Posterior vena cava (tissue), 2 donors: ENCODE measurements at regions of chr17 and their contacts with region 1.

Region 1: DNA sequence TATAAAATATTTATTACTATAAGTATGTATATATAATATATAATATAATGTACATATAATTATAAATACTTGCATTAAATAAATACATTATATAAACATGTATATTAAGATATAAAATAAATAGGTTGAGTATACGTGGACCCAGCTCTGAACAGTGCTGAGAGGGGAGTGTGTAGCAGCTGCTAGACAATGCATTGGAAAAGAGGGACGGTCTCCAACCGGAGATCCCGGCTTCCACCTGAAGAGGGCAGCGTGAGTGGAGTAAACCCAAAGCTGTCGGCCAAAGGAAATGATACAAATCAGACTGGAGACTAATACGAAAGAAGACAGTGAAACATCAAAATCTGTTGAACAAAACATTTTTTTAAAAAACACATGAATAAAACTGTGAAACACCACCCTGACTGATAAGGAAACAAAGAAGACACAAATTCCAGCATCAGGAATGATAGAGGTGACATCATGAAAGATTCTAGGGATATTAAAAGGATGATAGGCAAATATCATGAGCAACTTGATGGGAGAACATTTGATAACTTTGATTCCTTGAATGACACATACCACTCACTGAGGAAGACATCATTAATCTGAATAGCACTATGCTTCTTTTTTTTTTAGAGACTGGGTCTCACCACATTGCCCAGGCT is 125.4 kb upstream of the CHMP6 start:
- DNase-seq: peak; percentile 90

Region 2: DNA sequence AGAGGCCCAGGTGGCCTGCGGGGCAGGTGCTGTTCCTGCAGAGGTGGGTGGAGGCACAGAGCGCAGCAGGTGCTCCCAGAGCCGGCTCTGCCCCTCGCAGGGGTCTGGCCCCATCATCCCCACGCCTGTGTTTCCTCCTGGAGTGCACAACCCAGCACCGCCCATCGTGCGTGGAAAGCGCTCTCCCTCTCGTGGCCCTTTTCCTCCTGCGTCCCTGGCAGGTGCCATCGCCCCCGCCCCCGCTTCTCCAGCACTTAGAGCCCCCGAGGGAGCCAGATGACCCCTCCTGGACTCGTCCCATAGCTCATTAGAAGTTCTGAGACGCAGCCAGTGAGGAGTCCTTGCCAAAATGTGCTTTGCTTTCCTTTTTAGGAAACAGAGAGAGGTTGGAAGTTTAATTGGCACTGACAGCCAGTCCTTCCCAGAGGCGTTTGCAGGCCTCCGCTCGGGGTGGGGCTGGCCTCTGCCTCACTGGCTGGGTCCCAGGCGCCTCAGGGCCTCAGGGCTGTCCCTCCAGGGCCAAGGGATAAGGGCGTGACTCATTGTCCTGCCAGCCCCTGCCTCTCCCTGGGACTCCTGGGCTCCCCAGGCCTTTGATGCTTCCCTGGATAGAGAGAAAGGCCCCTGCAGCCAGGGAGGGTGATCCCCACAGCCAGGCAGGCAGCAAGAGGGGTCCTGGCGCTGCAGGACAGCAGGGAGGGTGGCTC is 93.2 kb after region 1 on chr17:
- intact Hi-C with region 1: loop called in 1 of 2 experiments (anchors 5 kb)
- DNase-seq: peak; percentile 96

Region 3: DNA sequence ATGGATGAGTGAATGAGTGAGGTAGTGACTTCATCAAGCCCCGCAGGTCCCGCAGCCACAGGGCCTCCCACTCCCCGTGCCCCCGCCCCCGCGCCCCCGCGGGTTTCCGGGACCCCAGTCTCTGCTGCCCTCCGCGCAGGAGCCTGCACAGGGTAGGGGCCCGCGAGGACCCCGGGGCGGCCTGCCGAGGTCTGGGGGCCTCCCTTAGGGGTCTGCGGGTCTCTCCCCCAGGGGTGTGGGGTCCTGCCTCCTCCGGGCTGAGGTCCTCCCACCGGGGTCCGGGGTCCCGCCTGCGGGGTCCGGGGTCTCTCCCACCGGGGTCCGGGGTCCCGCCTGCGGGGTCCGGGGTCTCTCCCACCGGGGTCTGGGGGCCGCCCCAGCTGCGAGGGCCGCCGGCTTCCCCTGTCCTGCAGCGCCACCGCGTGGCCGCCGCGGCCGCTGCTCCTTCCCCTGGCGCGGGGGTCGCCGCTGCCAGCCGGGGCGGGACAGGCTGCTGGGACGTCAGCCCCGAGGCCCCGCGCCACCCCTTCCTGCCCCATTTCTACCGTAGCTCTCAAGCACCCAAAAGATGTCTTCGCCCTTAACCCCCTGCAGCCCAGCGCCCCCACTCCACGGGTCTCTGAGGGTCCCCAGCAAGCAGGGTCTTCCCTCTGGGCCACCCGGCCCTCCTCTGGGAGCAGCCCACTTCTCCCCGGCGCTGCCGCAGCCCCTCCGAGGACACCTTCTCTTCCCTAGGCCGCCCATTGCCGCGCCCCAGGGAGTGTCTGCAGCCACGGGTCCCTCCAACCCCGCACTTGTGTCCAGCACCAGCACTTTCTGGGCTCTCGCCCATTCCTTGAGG is 115.0 kb after region 1 on chr17:
- intact Hi-C with region 1: loop called in 1 of 2 experiments (anchors 5 kb)
- DNase-seq: no peak